BJ (cell line): ENCODE measurements at regions of chr9 and their contacts with region 1.

Region 1: DNA sequence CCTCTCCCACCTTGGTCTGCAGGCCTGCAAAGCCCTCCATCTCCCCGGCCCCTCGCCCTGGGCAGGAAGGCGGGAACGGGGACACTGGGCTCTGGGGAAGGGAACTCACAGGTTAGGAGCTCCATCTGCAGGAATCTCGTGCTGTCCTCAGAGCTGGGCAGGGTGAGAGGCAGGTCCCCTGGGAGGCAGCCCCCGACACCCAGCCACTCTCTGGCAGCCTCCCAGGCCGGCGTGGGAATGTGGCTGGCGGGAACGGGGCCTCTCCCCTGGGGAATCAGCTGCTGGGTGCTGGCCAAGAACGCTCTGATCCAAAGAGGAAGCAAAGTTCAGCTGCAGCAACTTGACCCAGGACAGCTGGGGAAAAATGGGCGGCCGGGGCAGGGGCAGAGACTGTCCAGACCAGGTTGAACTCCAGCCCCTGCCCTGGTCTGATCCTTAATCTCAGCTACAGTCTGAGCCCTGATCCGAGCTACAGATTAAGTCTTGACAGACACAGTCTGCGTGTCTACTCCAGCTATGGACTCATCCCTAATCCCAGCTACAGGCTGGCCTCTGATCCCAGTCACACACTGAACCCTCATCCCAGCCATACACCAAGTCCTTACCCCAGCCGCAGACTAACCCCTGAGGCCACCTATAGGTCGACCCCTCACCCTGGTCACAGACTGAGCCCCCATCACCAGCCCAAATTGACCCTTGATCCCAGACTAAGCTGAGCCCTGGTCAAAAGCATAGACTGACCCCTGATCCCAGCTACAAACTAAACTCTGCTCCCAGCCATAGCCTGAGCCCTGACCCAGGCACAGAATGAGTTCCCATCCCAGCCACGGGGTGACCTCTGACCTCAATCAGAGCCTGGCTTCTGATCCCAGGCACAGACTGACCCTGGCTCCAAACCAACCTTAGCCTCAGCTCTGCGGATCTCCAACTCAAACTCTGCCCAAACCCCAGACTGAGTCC is 37.3 kb upstream of the EGFL7 start:
- DNase-seq: no peak
- H3K4me3 ChIP-seq: no peak overlapping the region
- H3K27me3 ChIP-seq: no peaks in the 10 kb centered on the region
- CTCF ChIP-seq: peak; percentile 59

Region 2: GRCh38 chr9:136093995-136094881 is 531.1 kb before region 1 on chr9:
- CTCF ChIA-PET with region 1: no interaction called
- POLR2A ChIA-PET with region 1: no interaction called
- DNase-seq: no peak
- H3K4me3 ChIP-seq: peak overlapping the region; percentile 68
- H3K27me3 ChIP-seq: no peaks in the 10 kb centered on the region
- CTCF ChIP-seq: no peak

Region 3: GRCh38 chr9:136118320-136119060 is 506.9 kb before region 1 on chr9 and contains the start of gene TMEM250:
- CTCF ChIA-PET with region 1: no interaction called
- POLR2A ChIA-PET with region 1: no interaction called
- DNase-seq: peak; percentile 74
- H3K4me3 ChIP-seq: peak within 1 kb of the TSS; percentile 60
- H3K27me3 ChIP-seq: no peaks in the 10 kb centered on the region; the same call in 1 of the 2 replicates
- CTCF ChIP-seq: no peak
- polyA plus RNA-seq, gene TMEM250: 12.3 and 20.7 TPM in 2 replicates

Region 4: DNA sequence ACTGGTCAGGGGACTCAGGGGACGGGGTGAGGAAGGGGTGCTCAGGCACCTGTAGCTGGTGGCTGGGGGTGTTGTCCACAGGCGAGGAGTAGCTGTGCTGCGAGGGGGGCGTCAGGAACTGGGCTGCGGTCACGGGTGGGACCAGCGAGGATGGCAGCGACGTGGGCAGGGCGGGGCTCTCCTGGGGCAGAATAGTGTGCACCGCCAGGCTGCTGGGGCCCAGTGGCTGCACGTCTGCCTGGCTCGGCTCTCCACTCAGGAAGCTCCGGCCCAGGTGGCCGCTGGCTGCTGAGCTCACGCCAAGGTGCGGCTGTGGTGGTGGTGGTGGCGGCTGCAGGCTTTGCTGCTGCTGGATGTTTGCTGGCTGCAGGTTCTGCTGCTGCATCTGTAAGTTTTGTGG is 129.2 kb before region 1 on chr9:
- CTCF ChIA-PET with region 1: interaction called, 385 read pairs
- POLR2A ChIA-PET with region 1: no interaction called
- DNase-seq: no peak
- H3K4me3 ChIP-seq: no peak overlapping the region
- H3K27me3 ChIP-seq: no peaks in the 10 kb centered on the region
- CTCF ChIP-seq: no peak

Region 5: DNA sequence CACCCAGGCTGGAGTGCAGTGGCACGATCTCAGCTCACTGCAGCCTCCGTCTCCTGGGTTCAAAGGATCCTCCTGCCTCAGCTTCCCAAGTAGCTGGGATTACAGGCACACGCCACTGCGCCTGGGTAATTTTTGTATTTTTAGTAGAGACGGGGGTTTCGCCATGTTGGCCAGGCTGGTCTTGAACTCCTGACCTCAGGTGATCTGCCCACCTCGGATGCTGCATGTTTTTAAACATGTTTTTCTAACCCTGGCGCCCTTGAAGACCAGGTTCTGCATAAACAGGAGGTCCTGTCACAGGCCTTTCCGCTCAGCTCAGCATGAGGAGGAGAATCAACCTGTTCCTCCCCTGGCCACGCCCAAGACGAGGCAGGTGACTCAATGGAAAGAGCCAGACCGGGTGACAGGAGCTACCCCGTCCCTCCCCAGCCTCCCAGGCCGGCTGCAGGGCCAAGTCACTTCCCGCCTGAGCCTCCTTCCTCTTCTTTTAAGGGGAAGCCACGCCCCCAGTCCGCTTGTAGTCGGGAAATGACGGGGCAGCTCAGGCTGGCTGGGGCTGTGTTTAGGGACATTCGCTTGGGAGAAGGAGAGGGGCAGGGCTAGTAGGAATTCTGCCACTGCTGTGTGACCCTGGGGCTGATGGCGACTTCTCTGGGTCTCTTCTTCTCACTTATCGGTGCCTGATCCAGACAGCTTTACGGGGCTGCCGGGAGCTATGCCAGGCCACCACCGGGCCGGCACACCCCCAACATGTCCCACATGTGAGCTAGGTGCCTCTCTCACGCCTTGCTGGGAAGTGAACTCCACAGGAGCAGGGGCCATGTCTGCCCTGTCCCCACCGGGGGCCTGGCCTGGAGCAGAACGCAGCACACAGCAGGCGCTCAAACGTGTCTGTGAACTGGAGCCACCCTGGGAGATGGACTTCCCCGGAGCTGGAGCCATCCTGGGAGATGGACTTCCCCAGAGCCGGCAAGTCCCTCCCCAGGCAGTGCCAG is 85.7 kb before region 1 on chr9:
- CTCF ChIA-PET with region 1: interaction called, 13 read pairs
- POLR2A ChIA-PET with region 1: no interaction called
- DNase-seq: no peak
- H3K4me3 ChIP-seq: no peak overlapping the region
- H3K27me3 ChIP-seq: no peaks in the 10 kb centered on the region
- CTCF ChIP-seq: no peak

Region 6: GRCh38 chr9:136602193-136602885 is 23.0 kb before region 1 on chr9:
- CTCF ChIA-PET with region 1: interaction called, 12 read pairs
- POLR2A ChIA-PET with region 1: no interaction called
- DNase-seq: no peak
- H3K4me3 ChIP-seq: no peak overlapping the region
- H3K27me3 ChIP-seq: peaks cover 3% of the 10 kb centered on the region; the same call in 1 of the 2 replicates
- CTCF ChIP-seq: no peak

Region 7: DNA sequence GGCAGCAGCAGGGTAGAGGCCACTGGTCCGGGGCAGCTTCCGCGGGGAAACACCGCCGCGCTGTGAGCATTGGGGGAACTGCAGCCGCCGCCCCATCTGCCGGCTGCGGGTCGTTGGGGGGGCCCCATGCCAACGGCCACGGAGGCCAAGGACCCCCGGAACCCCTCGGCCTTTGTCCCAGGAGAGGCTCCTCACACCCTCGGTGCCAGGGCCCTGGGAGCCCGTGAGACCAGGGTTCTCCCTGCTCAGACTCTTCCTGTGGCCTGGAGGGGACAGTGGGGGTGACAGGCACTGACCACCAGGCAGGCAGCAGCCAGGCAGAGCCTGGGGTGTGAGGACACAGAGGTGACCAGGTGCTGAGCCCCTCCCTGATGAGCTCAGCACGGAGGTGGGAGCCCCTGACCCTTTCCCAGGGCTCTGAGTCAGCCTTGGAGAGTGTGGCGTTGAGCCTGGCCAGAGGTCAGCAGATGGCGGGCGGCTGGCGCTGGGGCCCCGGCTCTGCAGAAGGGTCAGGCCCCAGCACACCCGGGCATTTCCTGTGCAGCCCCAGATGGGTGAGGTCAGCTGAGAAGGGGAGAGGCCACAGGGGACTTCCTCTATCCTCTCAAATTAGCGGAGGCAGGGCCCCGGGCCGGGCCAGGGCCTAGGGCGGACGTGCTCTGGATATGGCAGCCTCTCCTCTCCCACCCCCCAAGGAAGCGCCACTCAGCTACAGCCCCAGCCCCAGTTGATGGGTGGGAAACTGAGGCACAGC is 19.4 kb after region 1 on chr9:
- CTCF ChIA-PET with region 1: interaction called, 11 read pairs
- POLR2A ChIA-PET with region 1: no interaction called
- DNase-seq: no peak
- H3K4me3 ChIP-seq: no peak overlapping the region
- H3K27me3 ChIP-seq: peaks cover 24% of the 10 kb centered on the region
- CTCF ChIP-seq: peak; percentile 86

Region 8: GRCh38 chr9:136711751-136712689 is 86.6 kb after region 1 on chr9 and contains the start of gene DIPK1B:
- CTCF ChIA-PET with region 1: no interaction called
- POLR2A ChIA-PET with region 1: no interaction called
- DNase-seq: no peak
- H3K4me3 ChIP-seq: no peak within 1 kb of the TSS
- H3K27me3 ChIP-seq: peaks cover 6% of the 10 kb centered on the region; the same call in 1 of the 2 replicates
- CTCF ChIP-seq: no peak
- polyA plus RNA-seq, gene DIPK1B: 0.17 and 0.42 TPM in 2 replicates

Region 9: DNA sequence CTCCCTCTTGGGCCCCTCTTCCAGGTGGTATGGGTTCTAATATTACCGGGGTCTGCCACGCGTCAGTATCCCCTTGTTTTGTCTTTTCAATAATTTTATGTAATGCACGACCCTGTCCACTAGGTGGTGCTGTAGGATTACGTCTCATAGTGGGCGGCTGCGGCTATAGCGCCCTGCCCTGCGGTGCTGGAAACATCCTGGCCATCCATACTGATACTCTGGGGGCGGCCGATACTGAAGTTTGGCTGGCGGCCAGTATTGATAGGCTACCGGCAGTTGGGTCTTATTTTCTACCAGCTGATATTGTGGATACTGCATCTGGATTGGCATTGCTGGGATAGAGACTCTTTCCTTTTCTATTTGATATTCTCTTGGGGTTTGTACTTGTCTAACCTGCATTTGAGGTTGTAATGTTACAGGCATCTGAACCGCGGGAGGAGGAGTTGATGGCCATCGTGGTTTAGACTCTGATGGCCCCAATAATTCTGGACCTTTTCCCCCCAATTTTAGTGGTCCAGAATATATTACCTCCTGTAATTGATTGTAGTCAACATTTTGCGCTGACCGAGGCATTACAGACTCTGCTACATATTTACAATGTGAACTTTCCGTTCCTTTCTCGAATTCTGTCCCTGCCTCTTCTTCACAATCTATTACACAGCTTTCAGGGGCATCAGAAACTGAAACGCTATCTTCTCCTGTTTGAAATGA is 162.5 kb after region 1 on chr9:
- CTCF ChIA-PET with region 1: no interaction called
- POLR2A ChIA-PET with region 1: no interaction called
- DNase-seq: no peak
- H3K4me3 ChIP-seq: no peak overlapping the region
- H3K27me3 ChIP-seq: no peaks in the 10 kb centered on the region
- CTCF ChIP-seq: peak; percentile 78